ENCODE measurements at regions of chr18 and their contacts with region 1.

Region 1: DNA sequence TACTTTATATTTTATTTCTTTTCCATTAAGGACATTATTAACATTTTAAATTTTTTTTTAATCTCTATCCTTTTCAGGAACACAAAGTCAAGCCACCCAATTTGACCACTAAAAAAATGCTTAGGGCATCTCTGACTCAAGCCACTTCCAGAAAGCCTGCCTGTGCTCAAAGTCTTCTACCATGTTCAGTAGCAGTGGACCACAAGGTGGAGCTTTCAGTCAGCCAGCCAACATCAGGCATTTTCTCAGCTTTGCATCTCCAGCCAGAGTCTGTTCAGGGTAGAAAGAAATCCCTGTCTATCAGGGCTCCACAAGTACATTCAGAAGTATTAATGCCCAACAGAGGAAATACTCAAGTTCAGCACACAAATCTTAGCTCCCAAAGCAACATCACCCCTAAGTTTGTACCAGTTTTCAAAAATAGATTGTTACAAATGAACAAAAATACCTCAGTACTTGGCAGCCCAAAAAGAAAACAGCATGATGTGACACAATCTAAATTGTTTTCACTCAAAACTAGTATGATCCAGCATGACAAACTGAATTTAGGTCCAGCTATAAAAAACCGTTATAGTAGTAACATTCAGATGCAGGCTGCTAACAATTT is 37.6 kb downstream of the C18orf63 start:
- DNase-seq: peak; percentile 66 to 80 (median 74)
- ATAC-seq: peak; percentile 93
- H3K4me3 ChIP-seq: no peak overlapping the region
- H3K27ac ChIP-seq: no peak overlapping the region
- H3K4me1 ChIP-seq: no peaks in the 10 kb centered on the region
- H3K27me3 ChIP-seq: no peaks in the 10 kb centered on the region
- CTCF ChIP-seq: peak; percentile 55 to 86 (median 80)
- POLR2A ChIP-seq: no peak

Region 2: DNA sequence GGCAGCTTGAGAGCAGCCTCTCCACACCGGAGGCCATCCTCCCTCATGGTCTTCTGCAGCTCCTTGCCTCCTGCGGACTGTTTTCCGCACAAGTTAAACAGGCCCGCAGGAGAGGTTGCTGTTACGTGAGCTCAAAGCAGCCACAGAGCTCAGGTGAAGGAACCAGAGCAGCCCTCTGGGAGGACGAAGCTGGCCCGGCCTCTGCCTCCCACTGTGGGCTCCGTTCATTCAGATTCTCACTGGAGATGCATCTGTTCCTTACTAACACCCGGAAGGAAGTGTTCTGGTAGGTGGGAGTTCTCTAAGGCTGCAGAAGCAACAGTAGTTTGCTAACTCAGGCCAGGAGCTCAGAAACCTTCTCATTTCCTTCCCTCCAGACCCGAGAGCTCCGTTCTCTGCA is 92.9 kb after region 1 on chr18:
- intact Hi-C with region 1: no loop called
- DNase-seq: no peak
- ATAC-seq: no peak
- H3K4me3 ChIP-seq: no peak overlapping the region
- H3K27ac ChIP-seq: no peak overlapping the region
- H3K4me1 ChIP-seq: peaks cover 10% of the 10 kb centered on the region
- H3K27me3 ChIP-seq: no peaks in the 10 kb centered on the region
- CTCF ChIP-seq: no peak
- POLR2A ChIP-seq: no peak

Region 3: GRCh38 chr18:74546751-74547550 is 193.7 kb after region 1 on chr18:
- intact Hi-C with region 1: loop called (anchors 5 kb)
- DNase-seq: peak in 2 of 4 donors; percentile 22 to 37
- ATAC-seq: peak; percentile 51
- H3K4me3 ChIP-seq: no peak overlapping the region
- H3K27ac ChIP-seq: peak overlapping the region in 3 of 4 donors; percentile 37 to 63 (median 58)
- H3K4me1 ChIP-seq: peaks cover 30% of the 10 kb centered on the region
- H3K27me3 ChIP-seq: no peaks in the 10 kb centered on the region
- CTCF ChIP-seq: no peak
- POLR2A ChIP-seq: no peak

Region 4: GRCh38 chr18:74551936-74552555 is 198.8 kb after region 1 on chr18:
- intact Hi-C with region 1: loop called (anchors 5 kb)
- DNase-seq: peak; percentile 92 to 95 (median 92)
- ATAC-seq: peak; percentile 97
- H3K4me3 ChIP-seq: no peak overlapping the region
- H3K27ac ChIP-seq: peak overlapping the region in 1 of 4 donors; percentile 4
- H3K4me1 ChIP-seq: peaks cover 10% of the 10 kb centered on the region
- H3K27me3 ChIP-seq: no peaks in the 10 kb centered on the region
- CTCF ChIP-seq: peak; percentile 40 to 91 (median 85)
- POLR2A ChIP-seq: no peak

Region 5: GRCh38 chr18:74613381-74613780 is 260.1 kb after region 1 on chr18:
- intact Hi-C with region 1: no loop called
- DNase-seq: no peak
- ATAC-seq: no peak
- H3K4me3 ChIP-seq: no peak overlapping the region
- H3K27ac ChIP-seq: no peak overlapping the region
- H3K4me1 ChIP-seq: no peaks in the 10 kb centered on the region
- H3K27me3 ChIP-seq: no peaks in the 10 kb centered on the region
- CTCF ChIP-seq: no peak
- POLR2A ChIP-seq: no peak

Region 6: DNA sequence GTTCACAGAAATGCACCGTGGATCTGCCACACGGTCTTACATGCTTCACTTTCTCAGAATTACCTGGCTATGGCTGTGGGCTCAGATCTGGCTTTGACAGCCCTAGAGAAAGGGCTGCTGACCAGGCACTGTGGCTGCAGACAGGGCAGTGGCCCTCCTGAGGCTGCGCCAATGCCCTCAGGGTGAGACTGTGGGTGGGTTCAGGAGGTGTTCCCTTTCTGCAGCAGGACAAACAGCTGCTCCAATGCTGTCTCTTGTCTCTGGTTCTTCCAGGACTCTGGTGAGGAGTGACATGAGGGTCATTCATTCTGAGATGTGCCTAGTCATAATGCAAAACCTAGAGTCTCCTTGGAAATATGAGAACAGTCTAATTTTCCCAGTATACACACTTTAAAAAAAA is 1164.7 kb after region 1 on chr18:
- intact Hi-C with region 1: no loop called
- DNase-seq: no peak
- ATAC-seq: no peak
- H3K4me3 ChIP-seq: no peak overlapping the region
- H3K27ac ChIP-seq: no peak overlapping the region
- H3K4me1 ChIP-seq: no peaks in the 10 kb centered on the region
- H3K27me3 ChIP-seq: no peaks in the 10 kb centered on the region
- CTCF ChIP-seq: no peak
- POLR2A ChIP-seq: no peak